HEK293 (cell line): ENCODE measurements at regions of chr17 and their contacts with region 1.

Region 1: GRCh38 chr17:66567234-66568170 is 265.1 kb downstream of the PRKCA start:
- H3K4me3 ChIP-seq: no peak overlapping the region
- H3K27ac ChIP-seq: no peak overlapping the region
- H3K4me1 ChIP-seq: peaks cover 24% of the 10 kb centered on the region
- CTCF ChIP-seq: 0 out of 2 replicates have a peak, but pooled peaks have one; percentile 43

Region 2: GRCh38 chr17:66541461-66542128 is 25.9 kb before region 1 on chr17:
- CTCF ChIA-PET with region 1: interaction called, 20 read pairs
- POLR2A ChIA-PET with region 1: no interaction called
- H3K4me3 ChIP-seq: no peak overlapping the region
- H3K27ac ChIP-seq: peak overlapping the region; percentile 9; the same call in 1 of the 2 replicates
- H3K4me1 ChIP-seq: peaks cover 17% of the 10 kb centered on the region
- CTCF ChIP-seq: no peak

Region 3: GRCh38 chr17:66661381-66661843 is 93.9 kb after region 1 on chr17:
- CTCF ChIA-PET with region 1: no interaction called
- POLR2A ChIA-PET with region 1: no interaction called
- H3K4me3 ChIP-seq: no peak overlapping the region
- H3K27ac ChIP-seq: 0 out of 2 replicates have a peak overlapping the region, but pooled peaks have one; percentile 18
- H3K4me1 ChIP-seq: no peaks in the 10 kb centered on the region; the same call in 1 of the 2 replicates
- CTCF ChIP-seq: no peak